ENCODE measurements at regions of chr1 and their contacts with region 1.

Region 1: DNA sequence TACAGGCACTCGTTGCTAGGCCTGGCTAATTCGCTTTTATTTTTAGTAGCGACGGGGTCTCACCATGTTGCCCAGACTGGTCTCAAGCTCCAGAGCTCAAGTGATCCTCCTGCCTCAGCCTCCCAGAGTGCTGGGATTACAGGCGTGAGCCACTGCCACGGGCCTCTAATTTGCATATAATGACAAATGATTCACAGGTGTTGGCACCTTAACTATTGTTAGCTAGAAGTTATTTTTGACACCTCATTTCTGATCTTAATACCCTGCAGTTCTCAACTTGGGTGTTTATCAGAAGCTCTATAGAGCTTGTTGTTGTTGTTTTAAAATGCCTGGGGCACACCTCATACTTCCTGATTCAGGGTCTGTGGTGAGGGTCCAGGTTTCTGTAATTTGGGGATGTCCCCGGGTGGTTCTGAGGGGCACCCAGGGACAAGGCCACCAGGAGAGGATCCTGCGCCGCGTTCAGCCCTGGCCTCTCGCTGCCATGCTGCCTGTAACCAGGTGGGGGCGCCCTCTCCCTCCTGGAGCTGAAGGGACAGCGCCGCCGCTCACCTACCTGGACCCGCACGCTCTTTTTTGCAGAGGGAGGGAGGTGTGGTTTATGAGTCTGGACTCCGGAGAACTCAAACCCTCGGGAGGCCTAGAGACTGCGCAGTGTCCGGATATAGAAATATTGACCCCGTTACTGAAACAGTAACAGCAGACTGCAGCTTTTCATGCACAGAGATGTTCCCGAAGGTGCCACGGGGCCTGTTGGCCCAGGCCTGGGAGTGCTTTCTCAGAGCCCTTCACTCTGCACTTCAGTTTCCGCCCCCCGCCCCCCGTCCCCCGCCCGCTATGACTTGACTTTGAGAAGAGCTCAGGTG is 23.0 kb upstream of the NEK2 start:
- DNase-seq: peak; percentile 94
- H3K4me3 Mint-ChIP-seq: no peak overlapping the region
- H3K27ac Mint-ChIP-seq: no peak overlapping the region
- H3K4me1 Mint-ChIP-seq: no peaks in the 10 kb centered on the region
- H3K27me3 Mint-ChIP-seq: peaks cover 19% of the 10 kb centered on the region
- CTCF ChIP-seq: peak; percentile 98

Region 2: GRCh38 chr1:211735208-211736170 is 37.1 kb after region 1 on chr1:
- CTCF ChIA-PET with region 1: interaction called, 9 read pairs
- intact Hi-C with region 1: loop called (anchors 1 kb)
- DNase-seq: peak; percentile 90
- H3K4me3 Mint-ChIP-seq: peak overlapping the region; percentile 41
- H3K27ac Mint-ChIP-seq: peak overlapping the region; percentile 81
- H3K4me1 Mint-ChIP-seq: peaks cover 63% of the 10 kb centered on the region
- H3K27me3 Mint-ChIP-seq: no peaks in the 10 kb centered on the region
- CTCF ChIP-seq: no peak

Region 3: DNA sequence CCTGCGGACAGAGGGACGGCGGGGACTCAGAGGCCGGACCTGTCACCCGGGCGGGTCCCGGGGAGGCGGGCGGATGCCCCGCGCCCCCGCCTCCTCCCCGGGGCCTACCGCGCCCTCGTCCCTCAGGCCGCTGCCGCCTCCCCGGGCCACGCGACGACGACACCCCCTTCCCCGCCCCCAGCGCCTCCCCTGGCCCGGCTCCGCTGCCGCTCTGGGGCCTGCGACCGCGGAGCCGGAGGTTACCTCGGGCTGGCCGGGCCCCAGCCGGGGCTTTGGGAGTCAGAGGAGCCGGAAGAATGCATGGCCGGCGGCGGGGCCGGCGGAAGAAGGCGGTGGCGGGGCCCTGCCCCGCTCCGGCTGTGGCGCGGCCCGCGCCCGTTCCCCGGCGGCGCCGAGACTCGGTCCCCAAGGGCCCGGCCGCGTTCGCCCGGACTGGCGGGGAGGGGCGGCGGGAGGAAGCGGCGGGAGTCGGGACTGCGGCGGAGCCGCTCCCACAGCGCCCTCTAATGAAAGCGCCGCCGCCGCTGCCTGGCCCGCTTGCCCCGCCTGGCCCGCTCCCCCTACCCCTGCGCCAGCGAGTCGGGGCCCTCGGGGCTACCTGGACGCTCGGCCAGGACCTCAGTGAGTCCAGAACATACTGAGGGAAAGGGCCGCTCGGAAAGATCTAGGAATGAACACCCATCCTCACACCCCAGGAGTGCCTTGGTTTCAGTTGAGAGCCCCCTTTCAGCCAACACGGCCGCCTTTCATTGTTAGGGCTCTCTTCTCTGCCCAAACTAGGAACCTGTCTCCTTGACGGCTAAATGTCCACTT is 132.1 kb after region 1 on chr1 and contains the start of gene LPGAT1:
- CTCF ChIA-PET with region 1: interaction called, 4 read pairs
- intact Hi-C with region 1: loop called (anchors 2 kb)
- DNase-seq: peak; percentile 90
- H3K4me3 Mint-ChIP-seq: peak within 1 kb of the TSS; percentile 79
- H3K27ac Mint-ChIP-seq: peak within 1 kb of the TSS; percentile 65
- H3K4me1 Mint-ChIP-seq: peaks cover 17% of the 10 kb centered on the region
- H3K27me3 Mint-ChIP-seq: no peaks in the 10 kb centered on the region
- CTCF ChIP-seq: peak; percentile 70
- total RNA-seq, gene LPGAT1: 50.6 and 67.7 TPM in 2 replicates

Region 4: GRCh38 chr1:211876851-211877590 is 178.6 kb after region 1 on chr1:
- CTCF ChIA-PET with region 1: no interaction called
- intact Hi-C with region 1: no loop called
- DNase-seq: no peak
- H3K4me3 Mint-ChIP-seq: no peak overlapping the region
- H3K27ac Mint-ChIP-seq: no peak overlapping the region
- H3K4me1 Mint-ChIP-seq: no peaks in the 10 kb centered on the region
- H3K27me3 Mint-ChIP-seq: no peaks in the 10 kb centered on the region
- CTCF ChIP-seq: no peak

Region 5: GRCh38 chr1:211892577-211892976 is 194.2 kb after region 1 on chr1:
- CTCF ChIA-PET with region 1: no interaction called
- intact Hi-C with region 1: no loop called
- DNase-seq: no peak
- H3K4me3 Mint-ChIP-seq: no peak overlapping the region
- H3K27ac Mint-ChIP-seq: no peak overlapping the region
- H3K4me1 Mint-ChIP-seq: peaks cover 32% of the 10 kb centered on the region
- H3K27me3 Mint-ChIP-seq: no peaks in the 10 kb centered on the region
- CTCF ChIP-seq: no peak

Region 6: DNA sequence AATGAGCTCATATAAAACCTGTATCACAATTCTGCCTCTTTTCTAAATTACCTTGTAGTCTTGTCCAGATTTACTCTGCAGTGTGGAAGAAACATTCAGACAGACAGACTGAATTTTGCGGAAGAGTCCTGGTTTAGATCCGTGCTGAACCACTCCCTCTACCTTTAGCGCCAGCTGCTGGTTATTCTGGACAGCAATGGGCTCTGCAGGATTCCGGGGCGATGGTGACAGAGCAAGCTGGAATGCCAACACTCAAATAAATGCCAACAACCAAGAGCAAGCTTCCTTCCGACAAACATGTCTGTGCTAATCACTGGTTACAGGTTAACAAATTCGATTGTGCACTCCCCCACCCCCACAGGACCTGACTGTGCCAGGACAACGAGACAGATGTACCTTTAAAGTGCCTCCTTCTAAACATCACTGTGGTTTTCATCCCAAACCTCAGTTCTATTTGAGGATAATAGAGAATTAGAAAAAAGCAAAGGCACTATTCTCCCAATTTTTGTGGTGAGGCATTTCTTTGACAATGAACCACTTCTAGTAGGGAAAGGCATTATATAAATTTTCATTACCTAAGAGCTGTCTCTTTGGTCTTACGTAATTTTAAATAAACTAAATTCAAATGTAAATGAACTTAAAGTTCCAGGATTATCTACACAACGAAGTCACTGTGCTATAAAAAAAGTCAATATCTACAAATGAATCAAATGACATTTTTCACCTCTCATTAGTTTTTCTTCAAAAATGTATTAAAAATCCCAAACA is 246.5 kb after region 1 on chr1:
- CTCF ChIA-PET with region 1: interaction called, 20 read pairs
- intact Hi-C with region 1: loop called (anchors 1 kb)
- DNase-seq: peak; percentile 85
- H3K4me3 Mint-ChIP-seq: no peak overlapping the region
- H3K27ac Mint-ChIP-seq: peak overlapping the region; percentile 43
- H3K4me1 Mint-ChIP-seq: peaks cover 14% of the 10 kb centered on the region
- H3K27me3 Mint-ChIP-seq: no peaks in the 10 kb centered on the region
- CTCF ChIP-seq: peak; percentile 43

Region 7: DNA sequence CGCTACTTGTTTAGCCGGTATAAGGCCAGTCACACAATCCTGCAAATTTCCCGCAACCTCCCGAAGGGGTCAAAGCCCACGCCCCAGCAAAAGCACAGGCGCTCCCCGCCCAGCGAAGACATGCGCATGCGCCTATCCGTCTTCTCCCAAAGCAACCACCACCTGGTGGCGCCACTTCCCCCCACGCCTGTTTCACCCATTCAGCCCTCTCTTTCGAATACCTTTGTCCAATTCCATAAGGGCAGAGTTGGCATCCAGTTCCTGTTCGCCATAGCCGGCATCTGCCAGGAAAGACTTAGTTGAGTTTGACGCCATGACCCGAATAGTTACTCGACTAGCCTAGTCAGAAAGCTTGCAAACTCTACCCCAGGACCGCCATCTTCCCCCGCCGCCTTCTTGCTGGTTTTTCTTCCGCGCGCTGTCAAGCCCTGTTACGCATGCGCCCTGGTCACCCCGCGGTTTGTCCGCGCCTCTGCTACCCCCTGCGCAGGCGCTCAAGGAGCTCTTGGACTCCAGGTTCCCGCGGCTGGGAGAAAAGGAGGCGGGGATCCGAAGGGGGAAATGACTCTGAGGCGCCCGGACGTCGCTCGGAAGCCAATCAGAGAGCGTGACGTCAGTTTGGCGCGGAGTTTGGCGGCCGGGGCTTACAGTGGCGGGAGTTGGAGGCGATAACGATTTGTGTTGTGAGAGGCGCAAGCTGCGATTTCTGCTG is 336.9 kb after region 1 on chr1 and contains the starts of genes DTL and INTS7:
- CTCF ChIA-PET with region 1: interaction called, 14 read pairs
- intact Hi-C with region 1: no loop called
- DNase-seq: peak; percentile 99
- H3K4me3 Mint-ChIP-seq: peak within 1 kb of the TSS; percentile 92
- H3K27ac Mint-ChIP-seq: peak within 1 kb of the TSS; percentile 92
- H3K4me1 Mint-ChIP-seq: peaks cover 59% of the 10 kb centered on the region
- H3K27me3 Mint-ChIP-seq: no peaks in the 10 kb centered on the region
- CTCF ChIP-seq: peak; percentile 90
- total RNA-seq, gene DTL: 37.7 and 44.0 TPM in 2 replicates
- total RNA-seq, gene INTS7: 35.3 and 36.5 TPM in 2 replicates

Region 8: DNA sequence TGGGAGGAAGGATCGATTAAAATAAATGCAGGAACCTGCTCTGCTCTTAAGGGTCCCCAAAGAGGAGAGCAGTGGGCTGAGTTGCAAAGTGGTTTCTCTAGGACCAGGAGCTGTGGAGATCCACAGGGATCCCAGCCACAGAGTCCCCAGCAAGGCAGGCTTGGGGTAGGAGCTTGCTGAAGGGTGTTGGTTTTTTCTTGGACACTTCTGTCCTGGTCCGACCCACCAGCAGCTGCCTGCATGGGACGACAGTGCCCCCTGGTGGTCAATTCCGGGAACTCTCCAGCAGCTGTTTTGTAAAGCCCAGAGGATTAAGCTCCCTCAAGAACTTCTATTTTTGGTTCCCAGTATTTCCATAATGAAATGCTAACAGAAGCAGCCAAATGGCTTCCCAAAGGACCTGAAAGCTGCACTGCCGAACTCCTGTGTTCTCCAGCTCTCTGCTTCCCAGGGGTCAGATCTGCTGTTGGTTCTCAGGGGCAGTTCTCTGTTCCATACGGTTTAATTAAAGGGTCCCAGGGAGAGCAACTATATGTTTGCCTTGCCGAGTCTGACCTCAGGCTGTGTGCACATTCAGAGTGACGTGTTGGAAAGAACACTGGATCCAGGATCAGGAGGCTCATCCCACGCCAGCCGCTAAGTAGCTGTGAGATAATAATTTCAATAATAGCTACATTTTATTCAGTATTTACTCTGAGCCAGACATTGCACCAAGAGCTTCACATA is 757.6 kb after region 1 on chr1:
- CTCF ChIA-PET with region 1: no interaction called
- intact Hi-C with region 1: loop called (anchors 5 kb)
- DNase-seq: peak; percentile 92
- H3K4me3 Mint-ChIP-seq: no peak overlapping the region
- H3K27ac Mint-ChIP-seq: no peak overlapping the region
- H3K4me1 Mint-ChIP-seq: no peaks in the 10 kb centered on the region
- H3K27me3 Mint-ChIP-seq: no peaks in the 10 kb centered on the region
- CTCF ChIP-seq: peak; percentile 98

Measured in Calu3 (cell line).